Endothelial cell of umbilical vein (primary cell): ENCODE measurements at regions of chr1 and their contacts with region 1.

Region 1: DNA sequence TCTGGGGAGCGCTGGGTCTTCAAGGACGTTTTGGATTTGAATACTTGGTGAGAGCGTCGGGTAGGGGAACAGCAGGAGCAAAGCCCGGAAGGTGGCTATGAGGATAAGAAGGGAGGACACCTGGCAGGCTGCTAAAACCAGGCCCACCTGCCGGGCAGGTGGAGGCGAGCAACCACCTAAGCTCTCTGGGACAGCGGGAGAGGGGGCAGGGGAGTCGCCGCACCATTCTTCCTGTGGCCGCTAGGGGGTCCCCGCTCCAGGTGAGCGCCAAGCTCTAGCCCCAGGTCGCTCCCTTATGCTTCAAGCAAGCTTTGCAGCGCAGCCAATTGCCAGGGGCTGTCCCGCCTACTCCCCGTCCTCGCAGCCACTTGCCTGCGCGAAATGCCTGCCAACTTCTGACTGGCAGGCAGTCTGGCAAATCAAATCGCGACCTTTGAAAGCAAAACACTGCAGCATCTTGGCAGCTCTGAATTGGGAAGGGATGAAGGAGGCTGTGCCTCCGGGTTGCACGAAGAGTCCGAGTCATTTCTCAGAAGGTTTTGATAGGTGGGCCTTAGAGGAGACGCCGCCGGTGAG is at the start of gene NIPAL3:
- DNase-seq: peak; percentile 98
- H3K4me3 ChIP-seq: peak within 1 kb of the TSS; percentile 66 to 91 (median 70)
- H3K27ac ChIP-seq: no peak within 1 kb of the TSS
- H3K4me1 ChIP-seq: peaks cover 20% of the 10 kb centered on the region
- H3K27me3 ChIP-seq: no peaks in the 10 kb centered on the region
- CTCF ChIP-seq: peak; percentile 61 to 93
- POLR2A ChIP-seq: peak; percentile 35
- total RNA-seq, gene NIPAL3: 14.8 and 16.0 TPM in 2 replicates

Region 2: DNA sequence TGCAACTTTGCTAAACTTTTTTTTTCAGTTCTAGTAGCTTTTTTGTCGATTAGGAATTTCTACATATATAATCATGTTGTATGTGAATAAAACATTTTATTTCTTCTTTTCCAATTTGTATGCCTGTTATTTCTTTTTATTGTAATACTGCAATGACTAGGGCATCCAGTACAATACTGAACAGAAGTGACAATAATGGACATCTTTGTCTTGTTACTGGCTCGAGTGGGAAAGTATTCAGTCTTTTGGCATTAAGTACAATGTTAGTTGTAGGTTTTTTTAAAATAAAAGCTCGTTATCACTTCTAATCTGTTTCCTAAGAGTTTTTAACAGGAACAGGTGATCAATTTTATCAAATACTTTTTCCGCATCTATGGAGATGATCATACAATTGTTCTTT is 11.6 kb before region 1 on chr1:
- CTCF ChIA-PET with region 1: interaction called, 10 read pairs
- POLR2A ChIA-PET with region 1: no interaction called
- dilution Hi-C with region 1: no loop called
- intact Hi-C with region 1: no loop called
- DNase-seq: no peak
- H3K4me3 ChIP-seq: no peak overlapping the region
- H3K27ac ChIP-seq: no peak overlapping the region
- H3K4me1 ChIP-seq: no peaks in the 10 kb centered on the region
- H3K27me3 ChIP-seq: no peaks in the 10 kb centered on the region
- CTCF ChIP-seq: no peak
- POLR2A ChIP-seq: no peak

Region 3: DNA sequence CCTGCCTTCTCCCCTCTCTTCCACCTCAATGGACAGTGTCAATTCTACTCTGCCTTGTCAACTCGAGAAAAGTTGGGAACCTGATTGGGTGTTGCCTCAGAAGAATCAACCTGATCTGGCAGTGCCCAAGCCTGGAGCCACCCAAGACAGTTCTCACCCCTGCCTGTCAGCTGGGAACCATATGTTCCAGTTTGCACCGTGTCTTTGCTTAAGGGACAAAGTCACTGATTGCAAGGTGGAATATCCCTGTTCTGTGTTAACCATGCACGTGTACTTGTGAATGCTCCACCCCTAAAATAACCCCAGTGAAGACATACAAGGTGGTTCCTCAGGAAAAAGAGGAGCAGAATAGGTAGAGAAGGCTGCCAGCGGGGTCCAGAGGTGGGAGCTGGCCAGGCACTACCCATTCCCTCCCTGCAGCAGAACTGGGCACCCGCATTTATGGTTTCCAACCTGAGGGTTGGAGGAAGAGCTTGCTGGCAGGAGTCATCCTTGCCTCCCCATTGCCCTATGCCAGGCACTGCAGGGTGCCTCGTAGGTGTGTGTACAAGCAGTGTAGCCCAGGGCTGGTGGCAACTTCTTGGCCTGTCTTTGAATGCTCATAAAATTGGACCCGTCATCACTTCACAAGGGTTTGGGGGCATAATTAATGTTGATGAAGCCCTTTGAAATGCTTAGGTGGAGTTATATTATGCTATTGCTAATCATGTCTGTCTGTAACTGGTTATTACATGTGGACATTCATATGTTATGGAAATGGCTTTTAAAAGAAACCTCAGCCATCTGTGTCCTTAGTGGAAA is 11.5 kb after region 1 on chr1:
- CTCF ChIA-PET with region 1: interaction called, 10 read pairs
- POLR2A ChIA-PET with region 1: no interaction called
- dilution Hi-C with region 1: no loop called
- intact Hi-C with region 1: no loop called
- DNase-seq: no peak
- H3K4me3 ChIP-seq: no peak overlapping the region
- H3K27ac ChIP-seq: no peak overlapping the region
- H3K4me1 ChIP-seq: no peaks in the 10 kb centered on the region
- H3K27me3 ChIP-seq: no peaks in the 10 kb centered on the region
- CTCF ChIP-seq: no peak
- POLR2A ChIP-seq: no peak

Region 4: GRCh38 chr1:24502709-24503058 is 87.3 kb after region 1 on chr1 and contains the start of gene RCAN3:
- CTCF ChIA-PET with region 1: no interaction called
- POLR2A ChIA-PET with region 1: no interaction called
- dilution Hi-C with region 1: no loop called
- intact Hi-C with region 1: loop called (anchors 5 kb)
- DNase-seq: peak; percentile 40
- H3K4me3 ChIP-seq: peak within 1 kb of the TSS; percentile 47 to 72 (median 66)
- H3K27ac ChIP-seq: no peak within 1 kb of the TSS
- H3K4me1 ChIP-seq: peaks cover 5% of the 10 kb centered on the region
- H3K27me3 ChIP-seq: peaks cover 7 to 18% of the 10 kb centered on the region in 2 experiments
- CTCF ChIP-seq: no peak
- POLR2A ChIP-seq: peak; percentile 37
- total RNA-seq, gene RCAN3: 2.7 and 5.1 TPM in 2 replicates

Region 5: DNA sequence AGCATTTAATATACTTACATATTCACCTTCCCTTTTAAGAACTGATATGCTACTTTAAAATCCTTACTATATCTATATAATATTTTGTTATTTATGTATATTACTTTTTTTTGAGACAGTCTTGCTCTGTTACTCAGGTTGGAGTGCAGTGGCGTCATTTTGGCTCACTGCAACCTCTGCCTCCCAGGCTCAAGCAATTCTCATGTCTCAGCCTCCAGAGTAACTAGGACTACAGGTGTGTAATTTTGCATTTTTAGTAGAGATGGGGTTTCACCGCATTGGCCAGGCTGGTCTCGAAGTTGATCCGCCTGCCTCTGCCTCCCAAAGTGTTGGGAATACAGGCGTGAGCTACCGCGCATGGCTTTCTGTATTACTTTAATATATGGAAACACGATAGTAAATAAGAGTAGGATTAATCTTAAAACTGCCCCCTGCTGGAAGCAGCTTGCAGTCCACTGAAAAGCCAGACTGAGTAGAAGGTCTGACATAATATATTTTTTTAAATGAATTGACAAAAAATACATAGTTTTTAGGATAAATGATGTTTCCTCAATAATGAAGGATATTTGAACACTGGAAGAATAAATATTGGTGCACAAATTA is 111.6 kb after region 1 on chr1:
- CTCF ChIA-PET with region 1: interaction called, 10 read pairs
- POLR2A ChIA-PET with region 1: no interaction called
- dilution Hi-C with region 1: no loop called
- intact Hi-C with region 1: loop called (anchors 5 kb)
- DNase-seq: peak; percentile 23
- H3K4me3 ChIP-seq: no peak overlapping the region
- H3K27ac ChIP-seq: no peak overlapping the region
- H3K4me1 ChIP-seq: no peaks in the 10 kb centered on the region
- H3K27me3 ChIP-seq: no peaks in the 10 kb centered on the region
- CTCF ChIP-seq: peak; percentile 48 to 53
- POLR2A ChIP-seq: no peak

Region 6: GRCh38 chr1:24635195-24635843 is 219.9 kb after region 1 on chr1:
- CTCF ChIA-PET with region 1: no interaction called
- POLR2A ChIA-PET with region 1: no interaction called
- dilution Hi-C with region 1: no loop called
- intact Hi-C with region 1: loop called (anchors 1 kb)
- DNase-seq: peak; percentile 79
- H3K4me3 ChIP-seq: no peak overlapping the region
- H3K27ac ChIP-seq: no peak overlapping the region
- H3K4me1 ChIP-seq: no peaks in the 10 kb centered on the region
- H3K27me3 ChIP-seq: peaks cover 8 to 14% of the 10 kb centered on the region in 2 experiments
- CTCF ChIP-seq: peak; percentile 36 to 44
- POLR2A ChIP-seq: no peak

Region 7: GRCh38 chr1:24642481-24643361 is 227.3 kb after region 1 on chr1 and contains the start of gene SRRM1:
- CTCF ChIA-PET with region 1: no interaction called
- POLR2A ChIA-PET with region 1: no interaction called
- dilution Hi-C with region 1: no loop called
- intact Hi-C with region 1: loop called (anchors 2 kb)
- DNase-seq: peak; percentile 100
- H3K4me3 ChIP-seq: peak within 1 kb of the TSS; percentile 81 to 100 (median 81)
- H3K27ac ChIP-seq: peak within 1 kb of the TSS; percentile 84
- H3K4me1 ChIP-seq: peaks cover 18% of the 10 kb centered on the region
- H3K27me3 ChIP-seq: peaks cover 0 to under 1% of the 10 kb centered on the region in 2 experiments
- CTCF ChIP-seq: no peak
- POLR2A ChIP-seq: peak; percentile 98
- total RNA-seq, gene SRRM1: 157 and 163 TPM in 2 replicates